Naive thymus-derived CD4-positive, alpha-beta T cell (primary cell): ENCODE measurements at regions of chr19 and their contacts with region 1.

Region 1: GRCh38 chr19:12400633-12401502 is at the start of gene ZNF799:
- DNase-seq: peak; percentile 55 to 79 (median 76)
- ATAC-seq: peak; percentile 96
- H3K4me3 ChIP-seq: peak within 1 kb of the TSS; percentile 91
- H3K4me3 Mint-ChIP-seq: peak within 1 kb of the TSS; percentile 88 to 96 (median 94)
- H3K27ac ChIP-seq: peak within 1 kb of the TSS; percentile 59
- H3K27ac Mint-ChIP-seq: peak within 1 kb of the TSS; percentile 75 to 93 (median 82)
- H3K4me1 ChIP-seq: no peaks in the 10 kb centered on the region
- H3K4me1 Mint-ChIP-seq: peaks cover 5 to 34% (median 20%) of the 10 kb centered on the region in 7 donors
- H3K27me3 ChIP-seq: no peaks in the 10 kb centered on the region
- H3K27me3 Mint-ChIP-seq: no peaks in the 10 kb centered on the region
- total RNA-seq, gene ZNF799: 1.7 to 9.9 (median 4.4) TPM

Region 2: GRCh38 chr19:12365236-12366162 is 35.4 kb before region 1 on chr19 and contains the start of gene ZNF442:
- CTCF ChIA-PET with region 1: no interaction called
- POLR2A ChIA-PET with region 1: no interaction called
- intact Hi-C with region 1: loop called (anchors 1 kb)
- DNase-seq: peak; percentile 56 to 88 (median 80)
- ATAC-seq: peak; percentile 99
- H3K4me3 ChIP-seq: peak within 1 kb of the TSS; percentile 66
- H3K4me3 Mint-ChIP-seq: peak within 1 kb of the TSS; percentile 92 to 99 (median 97)
- H3K27ac ChIP-seq: peak within 1 kb of the TSS; percentile 68
- H3K27ac Mint-ChIP-seq: peak within 1 kb of the TSS; percentile 68 to 91 (median 85)
- H3K4me1 ChIP-seq: peaks cover 7 to 10% of the 10 kb centered on the region in 2 donors
- H3K4me1 Mint-ChIP-seq: peaks cover 0 to 33% (median 24%) of the 10 kb centered on the region in 7 donors
- H3K27me3 ChIP-seq: no peaks in the 10 kb centered on the region
- H3K27me3 Mint-ChIP-seq: peaks cover 0 to 10% (median 0%) of the 10 kb centered on the region in 5 donors
- total RNA-seq, gene ZNF442: 0.44 to 6.0 (median 0.58) TPM

Region 3: DNA sequence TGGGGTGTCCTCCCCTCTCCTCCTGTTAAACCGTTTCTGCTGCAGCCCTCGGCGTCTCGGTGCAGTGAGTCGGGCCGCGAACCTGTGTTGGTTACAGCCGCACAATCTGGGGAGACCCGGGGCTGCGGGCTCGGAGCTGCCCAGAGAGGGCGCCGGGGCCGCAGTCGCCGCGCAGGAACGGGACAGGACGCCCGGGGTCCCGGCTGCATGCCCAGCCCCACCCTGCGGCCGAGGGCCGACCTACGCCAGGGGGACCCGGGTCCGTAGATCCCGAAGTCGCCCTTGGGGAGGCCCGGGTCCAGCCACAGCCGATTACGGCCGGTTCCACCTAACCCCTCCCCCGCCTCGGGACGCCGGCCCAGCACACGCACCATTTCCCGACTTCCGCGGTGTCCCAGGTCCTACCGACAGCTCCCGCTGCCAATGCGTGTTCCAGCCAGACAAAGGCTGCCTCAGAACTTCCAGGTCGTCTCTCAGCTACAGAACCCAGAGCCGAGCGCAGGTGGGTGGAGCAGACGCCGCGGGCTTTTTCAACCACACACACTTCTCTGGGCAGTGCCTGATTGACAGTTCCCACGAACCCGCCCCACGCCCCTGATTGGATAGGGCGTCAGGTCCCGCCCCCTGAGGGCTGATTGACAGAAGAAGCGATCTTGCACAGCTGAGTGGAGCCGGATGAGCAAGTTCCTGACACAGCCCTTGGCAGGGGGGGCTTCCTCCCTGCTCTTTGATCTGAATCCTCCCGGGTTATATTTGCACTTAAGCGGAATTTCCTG is 39.9 kb after region 1 on chr19 and contains the start of gene ZNF443:
- CTCF ChIA-PET with region 1: no interaction called
- POLR2A ChIA-PET with region 1: interaction called, 3 read pairs
- intact Hi-C with region 1: loop called (anchors 2 kb)
- DNase-seq: peak; percentile 93 to 99 (median 98)
- ATAC-seq: peak; percentile 99
- H3K4me3 ChIP-seq: peak within 1 kb of the TSS; percentile 80
- H3K4me3 Mint-ChIP-seq: peak within 1 kb of the TSS; percentile 97 to 100 (median 100)
- H3K27ac ChIP-seq: peak within 1 kb of the TSS; percentile 72
- H3K27ac Mint-ChIP-seq: peak within 1 kb of the TSS; percentile 84 to 99 (median 96)
- H3K4me1 ChIP-seq: no peaks in the 10 kb centered on the region
- H3K4me1 Mint-ChIP-seq: peaks cover 12 to 34% (median 24%) of the 10 kb centered on the region in 7 donors
- H3K27me3 ChIP-seq: no peaks in the 10 kb centered on the region
- H3K27me3 Mint-ChIP-seq: no peaks in the 10 kb centered on the region
- total RNA-seq, gene ZNF443: 3.0 to 9.1 (median 4.1) TPM